ENCODE measurements at regions of chr5 and their contacts with region 1.

Region 1: GRCh38 chr5:168679515-168679920 is 100.3 kb upstream of the PANK3 start:
- DNase-seq: peak; percentile 22 to 43 (median 36)
- H3K4me3 ChIP-seq: no peak overlapping the region
- H3K4me3 Mint-ChIP-seq: no peak overlapping the region
- H3K27ac ChIP-seq: no peak overlapping the region
- H3K27ac Mint-ChIP-seq: no peak overlapping the region
- H3K4me1 ChIP-seq: peaks cover 5 to 6% of the 10 kb centered on the region in 2 donors
- H3K4me1 Mint-ChIP-seq: peaks cover 6% of the 10 kb centered on the region
- H3K27me3 ChIP-seq: no peaks in the 10 kb centered on the region
- H3K27me3 Mint-ChIP-seq: peaks cover 0 to 3% (median 0%) of the 10 kb centered on the region in 3 donors
- CTCF ChIP-seq: peak; percentile 89

Region 2: GRCh38 chr5:169063310-169063953 is 383.9 kb after region 1 on chr5:
- intact Hi-C with region 1: no loop called
- DNase-seq: no peak
- H3K4me3 ChIP-seq: no peak overlapping the region
- H3K4me3 Mint-ChIP-seq: no peak overlapping the region
- H3K27ac ChIP-seq: no peak overlapping the region
- H3K27ac Mint-ChIP-seq: no peak overlapping the region
- H3K4me1 ChIP-seq: no peaks in the 10 kb centered on the region
- H3K4me1 Mint-ChIP-seq: no peaks in the 10 kb centered on the region
- H3K27me3 ChIP-seq: no peaks in the 10 kb centered on the region
- H3K27me3 Mint-ChIP-seq: peaks cover 2 to 3% (median 3%) of the 10 kb centered on the region in 3 donors
- CTCF ChIP-seq: no peak

Region 3: DNA sequence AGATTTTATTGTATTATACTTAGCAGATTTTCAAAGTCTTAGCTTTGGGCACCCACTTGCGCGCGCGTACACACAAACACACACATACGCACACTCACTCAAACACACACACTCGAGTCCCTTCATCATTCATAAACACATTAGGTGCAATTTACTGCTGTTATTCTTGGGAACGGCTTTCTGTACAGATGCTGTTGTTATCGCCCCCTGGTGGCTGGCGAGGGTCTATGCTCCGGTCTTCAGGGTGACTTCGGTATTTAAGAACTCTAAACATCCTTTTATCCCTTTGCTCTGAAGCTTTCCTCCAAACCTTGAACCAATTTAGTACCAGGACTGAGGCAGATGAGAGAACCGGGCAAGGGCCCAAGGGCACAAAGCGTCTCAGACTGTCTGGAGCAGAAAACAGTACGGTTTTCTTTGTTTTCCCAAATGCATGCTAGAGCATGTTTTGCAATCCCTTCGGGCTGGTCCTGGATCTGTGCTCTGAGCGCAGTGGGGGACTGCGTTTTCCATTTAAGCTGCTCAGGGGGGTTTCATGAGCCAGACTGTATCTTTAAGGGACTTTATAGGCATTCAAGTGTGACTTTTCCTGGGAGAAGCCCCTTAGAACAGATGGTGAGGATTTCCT is 623.1 kb after region 1 on chr5:
- intact Hi-C with region 1: loop called in 1 of 2 experiments (anchors 5 kb)
- DNase-seq: peak; percentile 1 to 30 (median 9)
- H3K4me3 ChIP-seq: no peak overlapping the region
- H3K4me3 Mint-ChIP-seq: peak overlapping the region in 1 of 2 donors; percentile 81
- H3K27ac ChIP-seq: no peak overlapping the region
- H3K27ac Mint-ChIP-seq: no peak overlapping the region
- H3K4me1 ChIP-seq: no peaks in the 10 kb centered on the region
- H3K4me1 Mint-ChIP-seq: peaks cover 2% of the 10 kb centered on the region
- H3K27me3 ChIP-seq: peaks cover 13 to 29% of the 10 kb centered on the region in 2 donors
- H3K27me3 Mint-ChIP-seq: peaks cover 40 to 46% (median 44%) of the 10 kb centered on the region in 3 donors
- CTCF ChIP-seq: peak; percentile 90